ENCODE measurements at regions of chr13 and their contacts with region 1.

Region 1: DNA sequence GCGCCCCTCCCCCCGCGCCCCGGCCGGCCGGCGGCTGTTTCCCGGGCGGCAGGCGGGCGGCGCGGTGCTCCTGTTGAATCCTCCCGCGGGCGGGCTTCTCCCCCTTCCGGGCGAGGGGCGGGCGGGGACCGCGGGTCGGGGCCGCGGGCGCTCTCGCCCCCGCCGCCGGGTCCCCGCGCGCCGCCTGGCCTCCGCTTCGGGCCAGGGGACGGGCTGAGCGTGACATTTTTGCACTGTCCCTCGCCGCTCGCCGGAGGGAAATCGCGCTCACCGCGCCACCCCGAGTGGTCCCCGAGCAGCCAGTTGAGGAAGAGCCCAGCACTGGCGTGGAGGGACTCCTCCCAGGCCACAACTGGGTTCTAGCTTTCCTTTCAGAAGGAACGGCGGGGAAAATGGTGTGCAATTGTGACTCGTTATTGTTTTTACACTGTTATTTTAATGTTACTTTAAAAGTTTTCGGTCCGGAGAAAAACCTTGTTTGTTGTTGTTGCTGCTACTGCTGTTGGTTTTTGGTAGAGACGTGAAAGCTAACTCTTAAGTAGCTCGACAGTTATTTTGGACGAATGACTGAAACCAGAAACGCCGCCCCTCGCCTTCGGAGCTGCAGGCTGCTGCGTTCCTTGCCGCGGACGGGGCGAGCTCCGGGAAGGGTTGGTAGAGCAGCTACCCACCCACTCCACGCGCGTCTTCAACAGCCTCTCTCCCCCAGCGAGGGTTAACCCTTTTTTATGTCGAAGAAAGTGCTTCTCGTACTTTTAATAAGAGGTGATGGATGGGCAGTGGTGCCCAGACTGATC is 960 bp downstream of the PDS5B start:
- H3K4me3 ChIP-seq: peak overlapping the region; percentile 75
- H3K27ac ChIP-seq: peak overlapping the region; percentile 88
- H3K4me1 ChIP-seq: peaks cover 7% of the 10 kb centered on the region; the same call in 1 of the 2 replicates
- CTCF ChIP-seq: no peak

Region 2: DNA sequence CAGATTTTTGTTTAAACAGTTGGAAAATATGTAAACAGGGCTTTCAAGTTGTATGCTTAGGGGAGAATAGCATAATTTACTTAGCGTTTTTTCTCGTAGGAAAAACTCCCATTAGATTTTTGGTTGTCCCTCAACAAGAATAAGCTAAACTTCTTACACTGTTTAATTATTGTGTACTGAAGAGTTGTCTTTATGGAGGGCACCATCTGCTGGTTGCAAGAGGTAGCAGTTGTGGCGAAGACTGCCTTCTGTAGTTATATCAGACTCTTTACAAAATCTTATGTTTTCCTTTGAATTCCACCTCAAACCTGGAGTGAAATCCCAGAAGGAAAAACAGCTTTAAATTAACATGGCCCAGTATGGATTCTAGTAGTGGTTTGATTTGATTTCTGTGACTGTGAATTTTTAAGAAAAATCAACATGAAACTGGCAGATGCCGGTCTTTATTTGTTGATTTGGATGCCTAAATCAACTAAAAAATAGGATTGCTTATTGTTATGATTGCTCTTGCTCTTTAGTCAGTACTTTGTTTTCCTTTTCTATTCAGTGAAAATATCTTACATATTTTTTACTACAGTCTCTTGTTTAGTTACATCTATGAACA is 52.4 kb after region 1 on chr13:
- CTCF ChIA-PET with region 1: interaction called, 10 read pairs
- POLR2A ChIA-PET with region 1: interaction called, 5 read pairs
- H3K4me3 ChIP-seq: no peak overlapping the region
- H3K27ac ChIP-seq: no peak overlapping the region
- H3K4me1 ChIP-seq: peaks cover 2% of the 10 kb centered on the region
- CTCF ChIP-seq: no peak

Region 3: DNA sequence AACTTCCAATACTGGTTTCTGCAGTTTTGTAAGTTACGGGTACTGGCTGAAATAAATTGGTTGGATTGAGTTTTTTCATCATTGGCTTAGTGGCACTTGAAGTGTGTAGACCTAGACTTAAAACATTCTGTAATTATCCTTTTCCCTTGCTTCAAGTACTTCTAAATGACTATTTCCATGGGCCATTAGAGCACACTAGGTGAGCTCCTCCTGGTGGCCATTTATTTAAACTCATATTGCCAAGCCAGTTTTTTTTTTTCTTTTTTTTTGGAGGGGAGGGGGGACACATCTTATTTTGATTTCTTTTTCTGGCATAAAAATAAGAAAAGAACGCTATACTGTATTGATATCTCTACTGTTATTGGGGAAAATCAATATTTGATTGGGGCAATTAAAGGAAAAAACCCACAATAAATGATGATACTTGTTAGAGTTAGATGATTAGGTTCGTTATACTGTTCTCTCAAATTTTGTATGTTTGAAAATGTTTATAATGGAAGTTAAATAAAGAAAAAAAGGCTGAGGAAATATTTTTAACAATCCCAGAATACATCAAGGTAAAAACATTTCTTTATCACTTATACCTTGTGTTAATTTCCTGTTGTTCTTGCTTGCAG is 81.9 kb after region 1 on chr13:
- CTCF ChIA-PET with region 1: interaction called, 10 read pairs
- POLR2A ChIA-PET with region 1: no interaction called
- H3K4me3 ChIP-seq: no peak overlapping the region
- H3K27ac ChIP-seq: no peak overlapping the region
- H3K4me1 ChIP-seq: no peaks in the 10 kb centered on the region
- CTCF ChIP-seq: peak; percentile 36; the same call in 1 of the 2 replicates

Measured in HEK293 (cell line).